PC-9 (cell line): ENCODE measurements at regions of chr1 and their contacts with region 1.

Region 1: DNA sequence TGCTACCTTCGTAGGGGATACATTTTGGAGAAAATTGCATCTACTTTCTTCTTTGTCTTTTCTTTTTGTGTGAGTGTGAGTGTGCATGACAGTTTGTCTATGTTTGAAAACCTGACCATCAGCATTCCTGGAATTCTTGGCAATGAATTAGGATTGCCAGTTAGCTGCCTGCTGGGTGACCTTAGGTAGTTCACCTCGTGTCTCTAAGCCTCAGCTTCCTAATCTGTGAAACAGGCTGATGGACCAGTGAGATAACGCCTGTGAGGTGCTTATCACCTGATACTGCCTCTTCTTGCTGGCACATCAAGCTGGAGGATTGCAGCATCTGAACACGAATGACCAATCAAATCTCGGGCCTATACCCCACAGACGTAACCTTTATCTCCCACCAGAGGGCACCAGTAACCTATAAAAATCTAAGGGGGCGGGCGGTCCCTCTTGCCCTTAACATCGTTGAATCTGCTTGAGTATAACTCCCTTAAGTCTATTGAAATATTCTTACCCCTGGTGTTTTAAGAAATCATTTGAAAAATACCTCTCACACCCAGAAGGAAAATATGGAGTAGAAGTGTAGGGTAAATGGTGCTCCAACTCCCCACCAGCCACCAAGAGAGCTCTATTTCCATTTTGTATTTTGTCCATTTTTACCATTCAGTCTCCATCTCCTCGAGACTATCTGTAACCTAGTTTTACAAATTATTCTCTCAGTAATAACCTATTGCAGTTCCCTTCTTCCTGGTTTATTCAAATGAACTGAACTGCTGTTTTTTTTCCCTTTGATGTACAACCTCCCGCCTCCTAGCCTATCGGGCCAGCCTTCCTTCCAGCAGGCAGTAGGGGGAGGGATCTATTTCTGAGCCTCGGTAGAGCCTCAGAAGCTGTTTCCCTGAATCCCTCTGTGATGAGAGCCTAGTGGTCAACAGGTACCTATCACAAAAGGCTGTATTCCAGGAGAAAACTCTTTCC is 49.7 kb downstream of the MDM4 start:
- DNase-seq: peak; percentile 58 to 94
- H3K4me3 ChIP-seq: no peak overlapping the region
- H3K27ac ChIP-seq: peak overlapping the region; percentile 36
- H3K4me1 ChIP-seq: peaks cover 23% of the 10 kb centered on the region
- H3K27me3 ChIP-seq: no peaks in the 10 kb centered on the region
- CTCF ChIP-seq: peak; percentile 89

Region 2: GRCh38 chr1:204438628-204439027 is 127.3 kb before region 1 on chr1:
- CTCF ChIA-PET with region 1: no interaction called
- POLR2A ChIA-PET with region 1: no interaction called
- intact Hi-C with region 1: no loop called
- DNase-seq: peak; percentile 77 to 99
- H3K4me3 ChIP-seq: peak overlapping the region; percentile 13; the same call in 1 of the 2 replicates
- H3K27ac ChIP-seq: peak overlapping the region; percentile 89
- H3K4me1 ChIP-seq: peaks cover 90% of the 10 kb centered on the region
- H3K27me3 ChIP-seq: no peaks in the 10 kb centered on the region
- CTCF ChIP-seq: no peak

Region 3: GRCh38 chr1:204520834-204521709 is 44.8 kb before region 1 on chr1:
- CTCF ChIA-PET with region 1: no interaction called
- POLR2A ChIA-PET with region 1: no interaction called
- intact Hi-C with region 1: no loop called
- DNase-seq: no peak
- H3K4me3 ChIP-seq: no peak overlapping the region
- H3K27ac ChIP-seq: no peak overlapping the region
- H3K4me1 ChIP-seq: peaks cover 7% of the 10 kb centered on the region
- H3K27me3 ChIP-seq: no peaks in the 10 kb centered on the region
- CTCF ChIP-seq: no peak

Region 4: GRCh38 chr1:204581759-204582158 is 15.9 kb after region 1 on chr1:
- CTCF ChIA-PET with region 1: no interaction called
- POLR2A ChIA-PET with region 1: no interaction called
- intact Hi-C with region 1: no loop called
- DNase-seq: no peak
- H3K4me3 ChIP-seq: no peak overlapping the region
- H3K27ac ChIP-seq: no peak overlapping the region
- H3K4me1 ChIP-seq: 0 out of 2 replicates have a peak, but pooled peaks cover 3% of the 10 kb centered on the region
- H3K27me3 ChIP-seq: no peaks in the 10 kb centered on the region
- CTCF ChIP-seq: no peak

Region 5: GRCh38 chr1:204685236-204686006 is 119.5 kb after region 1 on chr1 and contains the start of gene LRRN2:
- CTCF ChIA-PET with region 1: no interaction called
- POLR2A ChIA-PET with region 1: no interaction called
- intact Hi-C with region 1: loop called (anchors 5 kb)
- DNase-seq: peak in 1 of 2 experiments; percentile 44
- H3K4me3 ChIP-seq: peak within 1 kb of the TSS; percentile 46; the same call in 1 of the 2 replicates
- H3K27ac ChIP-seq: no peak within 1 kb of the TSS
- H3K4me1 ChIP-seq: no peaks in the 10 kb centered on the region
- H3K27me3 ChIP-seq: peaks cover 42% of the 10 kb centered on the region
- CTCF ChIP-seq: no peak
- total RNA-seq, gene LRRN2: 4.6 and 7.0 TPM in 2 replicates

Region 6: DNA sequence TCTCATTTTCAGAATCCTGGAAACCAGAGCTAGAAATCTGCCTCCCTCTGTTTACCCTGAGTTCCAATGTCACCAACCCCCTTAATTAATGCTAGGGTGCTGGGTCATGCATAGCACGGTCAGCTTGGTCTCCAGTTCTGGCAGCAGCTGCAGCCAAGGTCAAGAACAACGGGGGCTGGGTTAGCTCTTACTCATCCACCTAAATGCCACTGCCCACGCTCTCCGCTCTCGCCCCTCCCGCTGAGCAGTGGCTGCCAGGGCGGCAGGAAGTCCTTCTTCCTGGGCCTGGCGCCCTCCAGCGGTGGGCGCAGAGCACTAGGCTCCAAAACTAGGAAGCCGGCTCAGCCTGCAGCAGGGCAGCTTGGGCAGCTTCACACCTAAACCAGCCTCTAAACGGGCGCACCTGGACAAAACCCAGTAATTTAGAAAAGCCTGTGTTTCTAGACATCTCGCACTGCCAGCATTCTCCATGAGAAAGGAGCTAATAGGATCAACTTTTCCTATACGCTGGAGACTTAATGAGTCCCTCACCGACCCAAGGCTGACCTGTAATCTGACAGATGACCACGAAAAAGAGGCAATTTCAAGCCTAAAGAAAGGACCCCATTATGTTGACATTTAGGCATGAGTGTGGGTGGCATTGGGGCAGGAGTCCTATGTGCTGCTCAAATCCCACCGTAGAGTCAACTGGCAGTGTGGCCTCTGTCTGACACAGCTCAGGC is 198.0 kb after region 1 on chr1:
- CTCF ChIA-PET with region 1: interaction called, 17 read pairs
- POLR2A ChIA-PET with region 1: no interaction called
- intact Hi-C with region 1: loop called (anchors 1 kb)
- DNase-seq: peak; percentile 72 to 75
- H3K4me3 ChIP-seq: no peak overlapping the region
- H3K27ac ChIP-seq: no peak overlapping the region
- H3K4me1 ChIP-seq: peaks cover 6% of the 10 kb centered on the region; the same call in 1 of the 2 replicates
- H3K27me3 ChIP-seq: peaks cover 18% of the 10 kb centered on the region
- CTCF ChIP-seq: peak; percentile 82

Region 7: DNA sequence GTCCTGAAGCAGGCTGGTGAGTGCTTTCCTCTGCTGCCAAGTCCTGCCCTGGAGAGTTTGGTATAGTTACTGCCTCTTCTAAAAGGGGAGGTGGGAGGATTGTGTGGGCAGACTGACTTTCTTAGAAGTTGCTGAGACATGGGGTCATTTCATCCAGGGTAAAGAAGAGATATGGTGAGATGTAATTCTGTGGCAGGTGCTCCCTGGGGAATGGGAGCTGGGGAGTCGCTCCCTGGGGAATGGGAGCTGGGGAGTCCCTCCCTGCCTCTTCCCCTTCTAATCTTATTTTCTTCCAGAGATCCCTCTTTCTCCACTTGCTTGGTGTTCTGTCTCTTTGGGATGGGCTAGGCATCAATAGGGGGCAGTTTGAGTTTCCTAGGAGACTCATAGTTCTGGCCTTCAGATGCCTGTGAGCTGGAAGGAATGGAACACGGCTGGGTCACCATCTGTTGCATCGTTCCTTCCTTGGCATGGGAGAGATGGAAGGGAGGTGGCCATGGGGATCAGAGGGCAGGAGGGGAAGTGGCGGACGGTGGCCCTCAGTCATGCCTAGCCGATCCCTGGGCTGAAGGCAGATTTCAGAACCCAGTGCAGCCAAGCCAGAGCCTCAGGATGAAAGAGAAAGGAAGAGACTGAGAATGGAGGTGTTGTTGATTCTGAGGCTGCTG is 363.7 kb after region 1 on chr1:
- CTCF ChIA-PET with region 1: no interaction called
- POLR2A ChIA-PET with region 1: no interaction called
- intact Hi-C with region 1: loop called (anchors 10 kb)
- DNase-seq: no peak
- H3K4me3 ChIP-seq: no peak overlapping the region
- H3K27ac ChIP-seq: no peak overlapping the region
- H3K4me1 ChIP-seq: no peaks in the 10 kb centered on the region
- H3K27me3 ChIP-seq: peaks cover 87% of the 10 kb centered on the region
- CTCF ChIP-seq: no peak